Lower lobe of right lung (tissue), 2 donors: ENCODE measurements at regions of chr17 and their contacts with region 1.

Region 1: DNA sequence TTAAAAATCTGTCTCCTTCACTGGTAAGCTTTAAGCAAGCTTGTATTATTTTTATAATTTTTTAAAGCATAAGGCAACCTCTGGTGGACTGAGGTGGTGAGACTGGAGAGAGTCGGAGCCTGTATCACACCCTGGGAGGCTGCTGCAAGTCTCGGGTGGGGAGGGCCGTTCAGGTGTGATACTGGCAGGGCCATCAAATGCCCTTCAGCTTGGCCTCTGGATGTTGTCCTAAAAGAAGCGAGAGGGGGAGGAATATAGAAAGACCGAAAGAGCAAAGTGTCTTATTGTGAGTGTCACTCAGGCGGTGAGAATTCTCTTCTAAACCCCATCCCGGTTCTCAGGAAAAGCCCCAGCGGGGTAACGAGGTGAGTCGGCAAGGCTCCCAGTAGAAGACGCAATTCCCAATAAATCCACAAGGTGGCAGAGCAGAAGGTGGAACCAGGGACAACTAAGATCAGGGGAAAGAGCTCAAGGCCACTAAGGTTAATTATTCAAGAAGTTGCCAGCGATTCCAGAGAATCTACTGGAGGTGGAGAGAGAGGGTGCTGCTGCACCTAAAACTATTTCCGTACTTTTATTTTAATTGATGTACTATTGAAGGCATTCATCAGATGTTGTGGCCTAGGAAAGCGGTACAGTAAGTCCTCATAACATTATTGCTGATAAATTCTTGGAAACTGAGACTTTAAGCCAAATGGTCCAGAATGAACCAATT is 14.1 kb downstream of the C17orf67 start:
- DNase-seq: no peak
- ATAC-seq: peak; percentile 88 to 89
- H3K4me3 ChIP-seq: no peak overlapping the region
- H3K27ac ChIP-seq: no peak overlapping the region
- H3K4me1 ChIP-seq: no peaks in the 10 kb centered on the region
- H3K27me3 ChIP-seq: no peaks in the 10 kb centered on the region
- CTCF ChIP-seq: peak; percentile 90

Region 2: GRCh38 chr17:56762988-56763387 is 56.6 kb before region 1 on chr17:
- intact Hi-C with region 1: no loop called
- DNase-seq: no peak
- ATAC-seq: no peak
- H3K4me3 ChIP-seq: no peak overlapping the region
- H3K27ac ChIP-seq: no peak overlapping the region
- H3K4me1 ChIP-seq: no peaks in the 10 kb centered on the region
- H3K27me3 ChIP-seq: no peaks in the 10 kb centered on the region
- CTCF ChIP-seq: no peak

Region 3: GRCh38 chr17:56939901-56940343 is 120.3 kb after region 1 on chr17:
- intact Hi-C with region 1: loop called (anchors 10 kb)
- DNase-seq: no peak
- ATAC-seq: peak; percentile 81
- H3K4me3 ChIP-seq: no peak overlapping the region
- H3K27ac ChIP-seq: no peak overlapping the region
- H3K4me1 ChIP-seq: no peaks in the 10 kb centered on the region
- H3K27me3 ChIP-seq: no peaks in the 10 kb centered on the region
- CTCF ChIP-seq: peak; percentile 70